ENCODE measurements at regions of chr15 and their contacts with region 1.

Region 1: GRCh38 chr15:65067645-65068402 is at the start of gene RASL12:
- DNase-seq: peak in 1 of 2 donors; percentile 85
- H3K4me3 ChIP-seq: peak within 1 kb of the TSS; percentile 56 to 75
- H3K27ac ChIP-seq: peak within 1 kb of the TSS; percentile 97
- H3K4me1 ChIP-seq: peaks cover 25 to 70% of the 10 kb centered on the region in 2 donors
- H3K27me3 ChIP-seq: no peaks in the 10 kb centered on the region
- CTCF ChIP-seq: no peak
- total RNA-seq, gene RASL12: 187 TPM

Region 2: DNA sequence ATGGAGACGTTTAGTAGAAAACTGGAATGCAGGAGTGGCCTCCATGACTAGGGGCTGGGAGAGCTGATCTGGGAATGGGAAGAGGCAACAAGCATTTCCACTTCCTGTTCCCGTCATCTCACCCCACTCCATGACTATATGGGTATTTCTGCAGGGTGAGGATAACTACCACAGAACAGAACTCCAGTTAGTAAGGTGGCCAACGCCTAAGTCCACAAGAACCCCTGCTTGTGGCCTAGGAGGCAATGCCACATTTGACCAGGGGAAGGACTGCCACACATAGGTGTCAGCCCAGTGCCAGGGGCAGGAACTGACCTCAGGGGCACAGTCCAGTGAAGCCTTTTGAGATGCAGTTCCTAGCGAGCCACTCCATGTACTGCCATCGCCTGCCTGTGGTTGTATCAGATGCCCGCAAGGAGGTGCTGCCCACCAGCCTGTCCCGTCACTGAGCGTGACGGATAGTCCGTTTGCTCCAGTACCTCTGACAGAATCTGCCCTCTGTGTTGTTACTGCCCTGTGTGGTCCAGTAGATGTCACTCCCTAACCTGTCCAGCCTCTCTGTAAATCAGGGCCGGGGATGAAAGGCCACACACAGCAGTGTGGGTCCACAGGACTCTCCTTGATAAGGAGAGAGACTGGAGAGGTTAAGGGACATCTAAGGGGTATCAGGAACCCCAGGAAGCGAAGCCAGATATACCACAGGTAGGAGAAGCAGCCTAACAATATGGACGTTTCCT is 34.9 kb before region 1 on chr15:
- intact Hi-C with region 1: no loop called
- DNase-seq: peak in 1 of 2 donors; percentile 80
- H3K4me3 ChIP-seq: no peak overlapping the region
- H3K27ac ChIP-seq: no peak overlapping the region
- H3K4me1 ChIP-seq: peaks cover 0 to 5% of the 10 kb centered on the region in 2 donors
- H3K27me3 ChIP-seq: no peaks in the 10 kb centered on the region
- CTCF ChIP-seq: peak; percentile 74 to 81 (median 81)

Region 3: DNA sequence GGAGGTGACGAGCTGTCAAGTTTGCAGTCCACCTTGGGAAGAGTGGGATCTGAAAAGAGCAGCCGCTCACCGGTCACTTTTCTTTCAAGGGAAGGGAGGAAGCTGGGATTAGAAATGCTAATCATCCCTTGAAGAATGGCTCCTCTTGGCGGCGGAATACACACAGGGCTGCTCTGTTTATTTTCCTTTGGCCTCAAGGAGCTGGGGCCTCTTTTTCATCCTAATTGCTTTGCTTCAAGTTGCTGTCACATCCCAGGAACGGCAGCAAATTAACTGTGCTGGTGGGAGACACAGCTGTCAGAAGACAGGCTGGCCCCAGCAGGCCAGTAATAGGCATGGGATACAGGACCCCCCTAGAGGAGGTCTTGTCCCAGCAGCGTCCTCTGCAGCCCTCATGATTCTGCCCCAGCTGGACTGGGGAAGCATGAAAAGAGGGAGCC is 15.5 kb after region 1 on chr15:
- intact Hi-C with region 1: loop called (anchors 2 kb)
- DNase-seq: no peak
- H3K4me3 ChIP-seq: no peak overlapping the region
- H3K27ac ChIP-seq: peak overlapping the region; percentile 96 to 98
- H3K4me1 ChIP-seq: peaks cover 46 to 67% of the 10 kb centered on the region in 2 donors
- H3K27me3 ChIP-seq: no peaks in the 10 kb centered on the region
- CTCF ChIP-seq: peak in 2 of 3 experiments; percentile 36 to 56

Measured in ascending aorta (tissue), 2 donors.